Heart right ventricle (tissue), 16 donors: ENCODE measurements at regions of chr10 and their contacts with region 1.

Region 1: GRCh38 chr10:132654702-132655661 is 117.4 kb downstream of the INPP5A start:
- DNase-seq: peak; percentile 35 to 61
- ATAC-seq: peak in 4 of 8 donors; percentile 30 to 42 (median 34)
- H3K4me3 ChIP-seq: no peak overlapping the region
- H3K27ac ChIP-seq: no peak overlapping the region
- H3K4me1 ChIP-seq: peaks cover 0 to 13% (median 0%) of the 10 kb centered on the region in 9 donors
- H3K27me3 ChIP-seq: no peaks in the 10 kb centered on the region
- CTCF ChIP-seq: peak; percentile 79 to 96 (median 90)

Region 2: DNA sequence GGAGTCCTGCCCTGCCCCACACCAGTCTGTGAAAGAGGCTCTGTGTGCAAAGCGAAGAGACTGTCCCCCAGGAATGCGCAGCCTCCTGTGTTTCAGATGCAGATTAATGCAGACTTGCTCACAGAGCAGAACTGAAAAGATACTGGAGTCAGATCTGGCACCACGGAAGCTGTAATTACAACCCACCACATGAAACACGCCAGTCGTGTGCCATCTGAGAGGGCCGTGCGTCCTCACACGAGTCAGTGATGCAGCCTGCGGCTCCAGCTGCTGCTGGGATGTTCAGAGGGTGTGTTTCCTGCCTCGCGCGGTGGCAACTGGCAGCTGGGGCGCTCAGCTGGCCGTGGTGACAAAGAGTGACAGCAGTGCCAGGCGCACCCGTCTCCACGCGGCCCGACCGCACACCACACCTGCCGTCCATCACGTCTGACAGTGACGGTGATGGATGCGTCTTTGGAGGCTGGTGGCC is 81.0 kb after region 1 on chr10:
- intact Hi-C with region 1: loop called in 1 of 10 experiments (anchors 5 kb)
- DNase-seq: no peak
- ATAC-seq: no peak
- H3K4me3 ChIP-seq: no peak overlapping the region
- H3K27ac ChIP-seq: no peak overlapping the region
- H3K4me1 ChIP-seq: peaks cover 0 to 23% (median 11%) of the 10 kb centered on the region in 9 donors
- H3K27me3 ChIP-seq: no peaks in the 10 kb centered on the region
- CTCF ChIP-seq: no peak

Region 3: GRCh38 chr10:132788180-132788830 is 133.3 kb after region 1 on chr10:
- intact Hi-C with region 1: loop called in 3 of 10 experiments (anchors 10 kb)
- DNase-seq: no peak
- ATAC-seq: peak in 1 of 8 donors; percentile 50
- H3K4me3 ChIP-seq: no peak overlapping the region
- H3K27ac ChIP-seq: no peak overlapping the region
- H3K4me1 ChIP-seq: peaks cover 0 to 40% (median 27%) of the 10 kb centered on the region in 9 donors
- H3K27me3 ChIP-seq: peaks cover 51 to 84% (median 82%) of the 10 kb centered on the region in 7 donors
- CTCF ChIP-seq: peak in 5 of 9 donors; percentile 8 to 32 (median 20)

Region 4: GRCh38 chr10:132793871-132794849 is 139.2 kb after region 1 on chr10:
- intact Hi-C with region 1: loop called in 3 of 10 experiments (anchors 10 kb)
- DNase-seq: no peak
- ATAC-seq: peak in 1 of 8 donors; percentile 9
- H3K4me3 ChIP-seq: no peak overlapping the region
- H3K27ac ChIP-seq: no peak overlapping the region
- H3K4me1 ChIP-seq: no peaks in the 10 kb centered on the region
- H3K27me3 ChIP-seq: peaks cover 7 to 44% (median 31%) of the 10 kb centered on the region in 7 donors
- CTCF ChIP-seq: peak in 1 of 9 donors; percentile 7

Region 5: DNA sequence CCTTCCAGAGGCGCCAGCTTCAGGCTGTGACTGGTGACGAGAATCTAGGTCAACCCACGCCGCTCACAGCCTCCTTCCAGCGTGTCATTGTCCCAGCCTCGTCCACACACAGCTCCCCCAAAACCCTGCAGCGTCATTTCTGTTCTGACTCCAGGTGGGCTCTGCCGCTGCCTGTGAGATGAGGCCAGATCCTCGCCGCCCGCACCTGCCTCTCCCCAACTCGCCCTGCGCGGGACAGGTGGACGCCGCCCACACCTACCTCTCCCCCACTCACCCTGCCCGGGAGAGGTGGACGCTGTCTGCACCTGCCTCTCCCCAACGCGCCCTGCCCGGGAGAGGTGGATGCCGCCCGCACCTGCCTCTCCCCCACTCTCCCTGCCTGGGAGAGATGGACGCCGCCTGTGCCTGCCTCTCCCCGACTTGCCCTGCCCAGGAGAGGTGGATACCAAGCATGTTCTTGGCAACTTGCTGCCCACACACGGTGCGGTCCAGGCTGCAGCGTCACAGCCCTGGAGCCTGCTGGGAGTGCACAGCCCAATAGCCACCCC is 319.3 kb after region 1 on chr10:
- intact Hi-C with region 1: no loop called
- DNase-seq: no peak
- ATAC-seq: no peak
- H3K4me3 ChIP-seq: no peak overlapping the region
- H3K27ac ChIP-seq: no peak overlapping the region
- H3K4me1 ChIP-seq: no peaks in the 10 kb centered on the region
- H3K27me3 ChIP-seq: peaks cover 0 to 87% (median 69%) of the 10 kb centered on the region in 7 donors
- CTCF ChIP-seq: no peak

Region 6: DNA sequence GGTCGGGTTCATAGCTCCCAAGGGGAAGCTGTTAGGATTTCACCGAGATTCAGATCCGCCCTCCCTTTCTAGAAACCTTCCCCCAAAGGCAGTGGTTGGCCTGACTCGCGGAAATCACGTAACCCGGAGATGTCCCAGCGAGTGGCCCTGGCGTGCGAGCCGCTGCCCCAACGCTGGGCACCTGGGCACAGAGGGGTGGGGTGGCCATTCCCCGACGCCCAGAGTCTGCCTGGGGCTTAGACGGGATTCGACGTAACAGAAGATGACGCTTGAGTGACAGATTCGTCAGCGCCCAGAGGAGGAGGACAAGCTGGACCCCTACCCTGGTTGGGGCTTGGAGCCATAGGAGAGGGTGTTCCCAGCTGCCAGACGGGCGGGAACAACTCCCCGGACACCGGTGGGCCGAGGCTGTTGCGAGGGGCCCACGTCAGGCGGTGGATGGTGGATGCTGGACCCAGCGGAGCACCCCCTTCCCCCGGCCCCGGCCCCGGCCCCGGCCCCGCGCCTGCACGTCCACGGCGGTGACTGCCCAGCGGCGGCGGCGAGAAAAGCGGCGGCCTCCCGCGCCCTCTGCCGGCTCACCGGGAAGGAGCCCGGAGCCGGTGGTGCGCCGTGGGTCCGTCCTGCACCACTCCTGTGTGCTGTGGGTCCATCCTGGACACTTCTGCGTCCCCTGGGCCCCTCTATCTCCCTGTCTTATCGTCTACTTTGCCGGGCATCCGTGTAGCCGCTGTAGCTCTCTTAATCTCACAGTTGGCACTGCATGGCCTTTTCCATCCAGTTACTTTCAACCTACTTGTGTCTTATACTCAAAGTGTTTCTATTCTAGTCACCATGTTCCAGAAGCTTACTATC is 469.6 kb after region 1 on chr10:
- intact Hi-C with region 1: loop called in 1 of 10 experiments (anchors 5 kb)
- DNase-seq: peak in 1 of 2 donors; percentile 50
- ATAC-seq: peak; percentile 54 to 73 (median 68)
- H3K4me3 ChIP-seq: no peak overlapping the region
- H3K27ac ChIP-seq: no peak overlapping the region
- H3K4me1 ChIP-seq: peaks cover 0 to 6% (median 0%) of the 10 kb centered on the region in 9 donors
- H3K27me3 ChIP-seq: peaks cover 0 to 44% (median 30%) of the 10 kb centered on the region in 7 donors
- CTCF ChIP-seq: peak; percentile 25 to 73 (median 64)